ENCODE measurements at regions of chr6 and their contacts with region 1.

Region 1: GRCh38 chr6:116387374-116387773 is 16.6 kb downstream of the DSE start:
- H3K4me3 ChIP-seq: no peak overlapping the region
- H3K27ac ChIP-seq: no peak overlapping the region
- H3K4me1 ChIP-seq: peaks cover 26% of the 10 kb centered on the region
- CTCF ChIP-seq: no peak

Region 2: GRCh38 chr6:116371120-116371917 is 16.1 kb before region 1 on chr6:
- CTCF ChIA-PET with region 1: interaction called, 4 read pairs
- POLR2A ChIA-PET with region 1: interaction called, 14 read pairs
- H3K4me3 ChIP-seq: peak overlapping the region; percentile 87
- H3K27ac ChIP-seq: peak overlapping the region; percentile 96
- H3K4me1 ChIP-seq: peaks cover 3% of the 10 kb centered on the region; the same call in 1 of the 2 replicates
- CTCF ChIP-seq: peak; percentile 48

Region 3: DNA sequence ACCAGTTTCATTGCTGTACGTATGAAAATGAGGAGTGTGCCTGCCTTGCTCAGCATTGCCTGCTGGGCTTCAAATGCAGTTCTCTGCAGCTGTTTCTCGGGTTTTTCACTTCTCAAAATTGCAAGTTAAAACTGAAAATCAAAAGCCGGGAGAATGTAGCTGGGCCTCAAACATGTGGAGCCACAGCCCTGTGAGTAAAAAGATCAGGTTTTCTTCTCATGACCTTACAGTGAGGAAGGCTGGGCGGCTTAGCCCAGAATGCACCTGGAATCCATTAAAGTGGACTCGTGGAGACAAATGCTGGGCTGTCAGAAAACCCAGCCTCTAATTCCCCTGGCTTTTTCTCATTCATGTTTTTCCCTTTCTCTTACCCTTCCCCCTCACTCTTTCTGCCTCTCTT is 17.8 kb after region 1 on chr6:
- CTCF ChIA-PET with region 1: interaction called, 15 read pairs
- POLR2A ChIA-PET with region 1: interaction called, 10 read pairs
- H3K4me3 ChIP-seq: no peak overlapping the region
- H3K27ac ChIP-seq: no peak overlapping the region
- H3K4me1 ChIP-seq: peaks cover 10% of the 10 kb centered on the region
- CTCF ChIP-seq: no peak